HEK293T (cell line): ENCODE measurements at regions of chr20 and their contacts with region 1.

Region 1: DNA sequence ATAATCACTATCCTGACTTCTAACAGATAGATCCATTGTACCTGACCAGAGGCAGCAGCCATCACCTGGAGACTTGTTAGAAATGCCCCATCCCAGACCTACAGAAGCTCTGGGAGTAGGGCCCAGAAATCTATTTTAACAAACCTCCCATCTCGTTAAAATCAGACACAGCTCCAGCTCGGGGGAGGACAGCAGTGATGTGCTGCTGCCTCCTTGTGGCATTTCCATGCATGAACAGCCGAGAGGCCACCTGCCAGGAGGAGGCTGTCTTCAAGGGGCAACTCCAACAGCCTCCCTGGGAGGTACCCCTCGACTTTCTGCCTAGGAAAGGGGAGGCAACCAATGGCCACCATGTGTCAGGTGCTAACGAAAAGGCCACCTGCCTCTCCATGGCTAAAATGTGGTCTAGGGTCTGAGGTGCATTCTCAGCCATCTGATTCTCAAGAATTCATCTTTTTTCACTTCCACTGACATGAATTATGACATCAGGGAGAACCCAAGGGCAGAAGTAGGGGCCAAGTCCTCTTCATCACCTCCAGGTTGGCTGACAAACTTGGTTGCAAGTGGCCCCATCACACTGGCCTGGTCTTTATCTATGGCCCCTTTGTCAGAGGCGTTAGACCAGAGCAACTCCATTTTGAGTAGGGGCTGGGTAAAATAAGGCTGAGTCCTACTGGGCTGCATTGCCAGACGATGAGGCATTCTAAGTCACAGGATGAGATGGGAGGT is 12.2 kb upstream of the KCNK15 start:
- DNase-seq: peak; percentile 74

Region 2: DNA sequence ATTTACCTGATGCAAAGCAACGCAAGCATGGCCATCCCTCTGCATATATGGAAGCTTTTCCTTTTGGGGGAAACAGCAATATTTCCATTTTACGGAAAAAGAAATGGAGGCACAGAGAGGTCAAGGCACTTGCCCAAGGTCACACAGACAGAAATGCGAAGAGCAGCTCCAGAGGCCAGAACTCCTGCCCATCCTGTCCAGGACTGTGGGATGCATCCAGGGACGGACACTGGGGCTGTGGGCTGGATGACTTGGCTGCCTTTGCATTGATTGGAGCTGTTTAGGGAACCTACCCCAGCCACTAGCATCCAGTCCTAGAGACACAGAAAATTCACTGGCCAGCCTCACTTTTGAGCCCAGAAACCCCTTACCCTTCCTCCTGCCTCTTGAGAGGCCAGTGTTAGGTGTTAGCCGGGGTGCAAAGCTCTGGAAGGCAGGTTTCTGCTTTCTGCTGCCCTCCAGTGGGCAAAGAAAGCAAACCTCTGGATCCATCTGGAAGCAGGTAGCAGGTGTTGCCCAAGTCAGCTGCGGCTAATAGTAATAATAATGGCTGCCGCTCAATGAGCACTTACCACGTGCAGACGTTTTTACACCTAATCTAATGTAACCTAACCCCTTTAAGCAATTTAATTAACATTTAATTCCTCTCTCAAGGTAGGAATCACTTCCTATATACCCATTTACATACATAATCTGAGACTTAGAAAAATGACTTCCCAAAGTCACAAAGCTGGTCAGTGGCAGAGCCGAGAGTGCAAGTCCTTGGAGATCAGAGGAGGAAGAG is 50.0 kb before region 1 on chr20:
- CTCF ChIA-PET with region 1: interaction called, 28 read pairs
- POLR2A ChIA-PET with region 1: no interaction called
- DNase-seq: peak; percentile 76